ENCODE measurements at regions of chr1 and their contacts with region 1.

Region 1: DNA sequence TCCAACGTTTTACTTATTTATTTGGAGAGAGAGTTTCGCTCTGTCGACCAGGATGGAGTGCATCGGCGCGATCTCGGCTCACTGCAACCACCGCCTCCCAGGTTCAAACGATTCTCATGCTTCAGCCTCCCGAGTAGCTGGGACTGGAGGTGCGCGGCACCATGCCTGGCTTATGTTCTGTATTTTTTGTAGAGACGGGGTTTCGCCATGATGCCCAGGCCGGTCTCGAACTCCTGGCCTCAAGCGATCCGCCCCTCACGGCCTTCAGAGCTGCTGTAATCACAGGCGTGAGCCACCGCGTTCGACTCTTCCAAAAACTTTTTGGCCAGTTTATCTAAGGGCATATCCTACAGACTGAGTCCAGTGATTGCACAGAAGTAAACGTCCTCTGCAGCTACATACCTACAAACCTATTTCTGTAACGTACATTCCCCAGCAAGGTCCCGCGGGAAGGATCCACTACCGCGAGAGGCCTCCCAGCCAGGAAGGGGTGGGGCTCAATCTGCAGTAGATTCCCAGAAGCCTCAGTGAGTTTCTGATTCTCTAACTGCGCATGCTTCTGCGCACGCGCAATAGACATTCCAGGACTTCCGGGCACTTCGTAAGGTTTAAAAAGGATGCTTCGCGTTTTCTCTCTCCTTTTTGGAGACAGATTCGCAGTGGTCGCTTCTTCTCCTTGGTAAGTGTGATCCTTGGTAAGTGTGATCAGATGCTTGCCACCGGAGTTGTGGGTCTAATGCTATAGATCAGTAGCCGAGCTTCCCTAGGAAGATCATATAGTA is at the start of gene RCC1:
- DNase-seq: peak; percentile 99
- H3K4me3 ChIP-seq: peak within 1 kb of the TSS; percentile 85
- H3K27ac ChIP-seq: peak within 1 kb of the TSS; percentile 94
- H3K4me1 ChIP-seq: peaks cover 5% of the 10 kb centered on the region
- H3K27me3 ChIP-seq: no peaks in the 10 kb centered on the region
- CTCF ChIP-seq: no peak
- total RNA-seq, gene RCC1: 111 and 125 TPM in 2 replicates

Region 2: DNA sequence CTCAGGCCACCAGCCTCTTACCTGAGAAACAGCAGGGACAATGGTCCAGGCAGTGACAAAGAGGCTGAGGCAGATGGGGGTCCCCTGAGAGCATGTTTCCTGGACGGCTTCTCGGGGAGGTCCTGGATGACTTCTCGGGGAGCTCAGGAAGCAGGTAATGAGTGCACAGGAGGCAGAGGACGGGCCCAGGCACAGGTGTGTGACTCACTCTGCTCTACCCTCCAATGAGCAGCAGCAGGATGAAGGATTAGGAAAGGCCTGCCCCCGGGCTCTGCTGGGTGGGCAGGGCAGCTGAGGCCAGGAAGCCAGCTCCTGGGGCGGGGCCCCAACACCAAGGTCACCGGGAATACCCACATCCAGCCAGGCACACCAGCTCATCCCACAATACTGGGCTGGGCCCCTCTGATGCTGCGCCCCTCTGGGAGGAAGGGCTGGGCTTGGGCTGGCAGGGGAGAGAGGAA is 311.9 kb before region 1 on chr1:
- CTCF ChIA-PET with region 1: no interaction called
- POLR2A ChIA-PET with region 1: interaction called, 20 read pairs
- intact Hi-C with region 1: no loop called
- DNase-seq: no peak
- H3K4me3 ChIP-seq: no peak overlapping the region
- H3K27ac ChIP-seq: no peak overlapping the region
- H3K4me1 ChIP-seq: no peaks in the 10 kb centered on the region
- H3K27me3 ChIP-seq: no peaks in the 10 kb centered on the region
- CTCF ChIP-seq: no peak

Region 3: DNA sequence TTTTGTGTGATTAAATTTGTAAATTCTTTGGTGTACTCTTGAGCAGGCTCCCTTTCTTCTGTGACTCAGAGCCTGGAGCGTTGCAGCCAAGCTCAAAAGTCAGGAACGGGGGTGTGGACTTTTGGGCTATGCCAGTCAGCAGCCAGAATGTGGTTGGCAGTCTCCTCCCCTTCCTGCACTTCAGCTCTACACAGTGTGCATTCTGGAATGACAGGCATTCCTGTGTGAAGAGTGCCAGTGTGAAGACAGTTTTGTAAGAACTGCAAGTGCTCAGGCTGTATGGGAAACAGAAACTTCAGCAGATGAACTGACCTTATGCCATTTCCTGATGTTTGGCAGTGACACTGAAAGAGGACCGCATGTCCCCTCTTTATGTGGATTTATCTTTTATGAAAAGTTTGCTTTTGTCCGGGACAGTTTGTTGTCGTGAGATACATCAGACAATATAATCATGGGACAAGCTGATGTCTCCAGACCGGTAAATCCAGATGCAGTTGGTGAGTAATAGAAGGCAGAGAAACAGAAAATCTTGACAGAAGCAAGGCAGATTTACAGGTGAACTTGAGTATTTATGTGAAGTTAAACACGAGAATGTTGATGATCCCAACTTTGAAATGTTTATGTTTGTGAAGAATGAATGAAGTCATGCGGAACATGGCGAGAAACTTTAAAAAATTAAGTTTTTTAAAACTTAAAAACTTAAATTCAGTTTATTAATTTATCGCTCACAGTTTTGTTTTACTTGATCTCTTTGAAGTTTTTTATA is 67.5 kb before region 1 on chr1:
- CTCF ChIA-PET with region 1: no interaction called
- POLR2A ChIA-PET with region 1: interaction called, 4 read pairs
- intact Hi-C with region 1: loop called (anchors 5 kb)
- DNase-seq: peak; percentile 98
- H3K4me3 ChIP-seq: peak overlapping the region; percentile 29
- H3K27ac ChIP-seq: peak overlapping the region; percentile 68
- H3K4me1 ChIP-seq: peaks cover 32% of the 10 kb centered on the region
- H3K27me3 ChIP-seq: no peaks in the 10 kb centered on the region
- CTCF ChIP-seq: no peak

Region 4: DNA sequence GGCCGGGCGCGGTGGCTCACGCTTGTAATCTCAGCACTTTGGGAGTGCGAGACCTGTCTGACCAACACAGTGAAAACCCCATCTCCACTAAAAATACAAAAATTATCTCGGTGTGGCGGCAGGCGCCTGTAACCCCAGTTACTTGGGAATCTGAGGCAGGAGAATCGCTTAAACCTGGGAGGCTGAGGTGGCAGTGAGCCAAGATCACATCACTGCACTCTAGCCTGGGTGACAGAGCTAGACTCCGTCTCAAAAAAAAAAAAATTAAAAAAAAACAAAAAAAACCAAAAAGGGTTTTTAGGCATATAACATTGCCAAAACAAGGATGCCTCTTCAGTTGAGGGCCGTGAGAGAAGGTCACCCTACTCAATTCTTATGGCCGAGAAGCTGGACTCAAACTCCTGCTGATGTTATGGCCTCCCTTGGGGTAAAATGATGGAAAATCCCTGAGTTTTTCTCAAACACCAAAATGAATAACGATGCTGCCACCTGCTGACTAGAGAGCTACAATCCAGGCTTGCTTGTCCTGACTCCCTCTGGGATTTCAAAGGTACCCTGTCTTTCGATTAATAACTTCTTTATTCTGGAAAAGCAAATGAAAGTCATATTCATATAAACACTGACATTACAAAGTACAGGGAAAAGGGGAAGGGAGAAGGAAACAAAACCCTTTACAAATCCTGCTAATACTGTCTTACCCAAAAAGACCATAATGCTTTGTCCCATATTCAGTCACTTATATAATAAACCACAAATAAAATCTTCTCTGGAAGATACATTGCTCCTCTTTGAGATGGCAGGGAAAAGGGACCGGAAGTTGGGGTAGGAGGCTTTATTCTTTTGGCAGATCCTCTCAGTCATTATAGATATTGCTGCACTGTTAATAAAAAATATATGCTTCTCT is 97.2 kb after region 1 on chr1:
- CTCF ChIA-PET with region 1: no interaction called
- POLR2A ChIA-PET with region 1: no interaction called
- intact Hi-C with region 1: no loop called
- DNase-seq: peak; percentile 89
- H3K4me3 ChIP-seq: no peak overlapping the region
- H3K27ac ChIP-seq: no peak overlapping the region
- H3K4me1 ChIP-seq: peaks cover 6% of the 10 kb centered on the region
- H3K27me3 ChIP-seq: no peaks in the 10 kb centered on the region
- CTCF ChIP-seq: peak; percentile 87

Measured in A673 (cell line).